Common myeloid progenitor, CD34-positive (primary cell): ENCODE measurements at regions of chr2 and their contacts with region 1.

Region 1: GRCh38 chr2:37168217-37168981 is 11.6 kb upstream of the EIF2AK2 start:
- DNase-seq: peak in 2 of 3 donors; percentile 59 to 62
- H3K4me3 ChIP-seq: no peak overlapping the region
- H3K27ac ChIP-seq: no peak overlapping the region
- H3K4me1 ChIP-seq: no peaks in the 10 kb centered on the region
- H3K27me3 ChIP-seq: no peaks in the 10 kb centered on the region

Region 2: DNA sequence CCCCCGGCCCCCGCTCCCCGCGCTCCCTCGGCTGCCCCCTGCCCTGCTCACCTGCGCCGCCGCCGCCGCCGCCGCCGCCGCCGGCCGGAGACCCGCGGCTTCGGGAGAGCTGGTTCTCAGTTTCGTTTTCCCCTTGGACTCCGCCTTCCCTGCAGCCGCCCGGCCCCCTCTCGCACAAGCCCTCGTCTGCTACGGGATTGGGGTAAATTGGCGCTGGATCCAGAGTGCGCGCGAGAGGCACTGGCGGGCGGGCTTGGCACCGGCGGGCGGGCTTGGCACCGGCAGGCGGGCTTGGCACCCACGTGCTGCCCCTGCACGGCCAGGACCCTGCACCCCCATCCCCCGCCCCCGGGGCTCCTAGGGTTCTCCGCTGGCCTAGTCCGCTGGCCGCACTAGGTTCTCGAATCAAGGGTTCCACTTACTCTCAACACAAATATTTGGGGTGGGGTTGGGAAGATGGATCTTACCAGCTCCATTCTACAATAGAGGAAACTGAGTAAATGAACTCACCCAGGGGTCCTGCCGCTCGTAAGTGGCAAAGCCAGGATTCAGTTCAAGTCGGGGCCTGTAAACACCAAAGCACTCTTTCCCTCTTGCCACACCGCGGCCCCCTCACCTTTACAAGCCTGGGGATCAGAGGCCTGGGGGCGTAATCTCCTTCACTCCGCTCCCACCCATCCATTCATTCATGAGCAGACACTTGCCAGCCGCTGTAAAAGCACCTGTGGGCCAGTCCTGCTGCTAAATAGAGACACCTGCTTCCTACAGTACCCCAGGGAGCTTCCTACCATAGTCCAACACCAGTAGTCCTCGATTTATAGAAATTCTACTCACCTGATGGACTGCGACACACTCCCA is 11.3 kb before region 1 on chr2 and contains the start of gene EIF2AK2:
- CTCF ChIA-PET with region 1: interaction called, 18 read pairs
- POLR2A ChIA-PET with region 1: no interaction called
- DNase-seq: peak; percentile 87 to 94 (median 94)
- H3K4me3 ChIP-seq: peak within 1 kb of the TSS; percentile 62 to 94 (median 84)
- H3K27ac ChIP-seq: peak within 1 kb of the TSS; percentile 86 to 88
- H3K4me1 ChIP-seq: peaks cover 3 to 22% (median 20%) of the 10 kb centered on the region in 4 experiments
- H3K27me3 ChIP-seq: no peaks in the 10 kb centered on the region